ENCODE measurements at regions of chr5 and their contacts with region 1.

Region 1: DNA sequence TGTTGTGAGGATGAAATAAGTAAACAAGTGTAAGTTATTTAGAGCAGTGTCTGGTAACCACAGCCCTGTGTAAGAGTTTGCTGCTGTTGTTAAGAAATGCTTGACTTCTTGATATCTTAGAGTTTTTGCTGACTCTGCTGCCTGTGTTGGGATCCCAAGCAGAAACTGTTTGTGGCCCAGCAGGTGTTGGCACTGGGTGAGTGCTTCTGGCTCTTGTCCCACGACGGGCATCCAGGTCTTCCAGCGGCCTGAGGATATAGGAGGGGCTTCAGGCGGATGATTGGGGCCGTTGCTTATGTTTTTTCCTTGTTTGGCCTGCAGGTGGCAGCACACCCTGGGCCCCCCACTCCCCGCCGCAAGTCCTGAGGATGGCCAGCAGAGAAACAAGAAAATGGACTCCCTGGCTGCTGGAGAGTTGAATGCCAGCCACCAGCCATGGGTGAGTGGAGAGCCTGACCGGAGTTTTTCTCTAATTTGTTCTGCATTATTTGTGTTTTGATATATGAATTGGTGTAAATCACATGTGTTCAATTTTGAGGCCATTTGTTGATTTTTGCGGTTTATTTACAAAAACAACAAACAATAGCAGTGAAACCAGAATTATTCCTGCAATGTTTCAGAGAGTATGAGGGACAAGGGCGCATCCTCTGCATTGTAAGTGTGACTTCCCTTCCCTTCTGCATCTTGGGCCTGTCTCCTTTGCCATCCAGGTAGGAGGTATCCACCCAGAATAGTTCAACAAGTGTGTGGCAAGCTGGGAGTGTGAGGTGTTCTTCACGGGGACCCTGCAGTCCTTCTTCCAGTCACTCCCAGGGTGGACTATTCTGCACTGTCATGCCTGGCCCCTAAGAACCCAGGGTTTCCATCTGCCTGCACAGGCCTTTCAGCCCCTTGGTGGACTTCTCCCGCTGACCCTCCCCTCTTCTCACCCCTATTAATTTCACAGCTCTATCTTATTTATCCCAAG is 50.3 kb downstream of the SLC22A5 start:
- DNase-seq: peak; percentile 52 to 96 (median 70)

Region 2: DNA sequence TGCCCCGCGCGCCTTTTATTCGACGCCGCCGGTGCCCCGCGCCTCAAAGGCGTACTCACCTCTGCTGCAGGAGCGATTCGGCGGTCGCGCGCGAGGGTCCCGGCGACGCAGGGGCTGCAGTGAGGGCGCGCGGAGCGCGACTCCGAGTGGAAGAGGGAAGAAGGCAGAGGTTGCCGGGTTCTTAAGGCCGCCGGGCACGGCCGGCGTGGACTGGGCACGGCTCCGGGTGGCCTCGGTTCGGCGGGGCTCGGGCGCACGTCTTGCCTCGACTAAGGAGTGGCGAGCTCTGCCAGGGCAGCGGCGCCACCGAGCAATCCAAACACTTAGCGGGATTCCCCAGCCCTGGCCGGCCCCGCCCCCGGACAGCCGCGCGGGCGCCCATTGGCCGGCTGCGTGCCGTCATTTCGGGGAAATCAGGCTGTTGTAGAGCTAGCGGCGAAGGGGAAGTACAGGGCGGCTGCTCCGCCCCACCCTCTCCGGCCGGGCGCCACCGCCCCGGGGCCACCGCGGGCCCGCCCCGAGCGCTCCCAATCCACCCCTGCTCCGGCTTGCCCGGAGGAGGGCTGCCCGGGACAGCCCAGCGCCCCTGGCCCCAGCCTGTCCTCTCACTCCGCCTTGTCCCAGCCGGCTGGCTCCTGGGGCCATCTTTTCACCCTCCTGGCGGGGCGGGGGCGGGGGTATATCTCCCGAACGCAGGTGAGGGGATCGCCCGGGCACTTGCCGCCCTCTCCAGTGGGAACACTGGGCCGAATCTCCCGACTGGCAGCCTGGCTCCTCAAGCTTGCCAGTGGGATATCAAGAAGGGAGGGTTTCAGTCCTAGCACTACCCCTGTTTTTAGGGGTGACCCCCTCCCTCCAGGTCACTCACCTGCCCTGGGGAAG is 70.9 kb after region 1 on chr5 and contains the start of gene IRF1:
- intact Hi-C with region 1: loop called (anchors 1 kb)
- DNase-seq: peak; percentile 89 to 99 (median 95)